ENCODE measurements at regions of chr4 and their contacts with region 1.

Region 1: DNA sequence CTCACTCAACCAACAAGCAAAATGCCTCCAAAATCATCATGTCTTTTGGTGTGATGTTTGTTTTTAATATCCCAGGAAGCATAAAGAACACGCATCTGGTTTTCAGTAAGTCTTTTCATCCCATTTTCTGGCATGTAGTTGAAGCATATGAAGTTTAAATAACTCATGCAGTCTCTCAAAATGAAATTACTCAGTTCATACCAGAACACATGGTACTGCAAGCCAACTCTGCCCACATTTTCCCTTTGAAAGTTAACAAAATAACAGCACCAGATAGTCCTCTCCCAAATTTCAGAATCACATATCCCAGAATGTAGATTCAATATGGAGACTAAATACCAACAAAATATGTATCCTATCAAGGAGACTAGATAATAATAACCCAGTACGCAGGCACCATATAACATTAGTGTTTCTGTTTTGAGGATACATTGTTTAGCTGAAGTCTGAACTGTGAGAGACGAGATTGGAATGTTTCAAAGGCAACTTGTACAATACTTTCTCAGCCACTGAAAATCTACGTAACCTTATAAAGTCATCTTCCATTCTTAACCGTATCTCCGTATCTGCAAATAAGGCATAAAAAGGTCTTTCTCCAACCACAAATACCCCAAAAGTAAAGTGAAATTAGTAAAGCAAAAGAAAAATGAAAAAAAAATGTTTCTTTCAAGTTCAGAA is 23.1 kb downstream of the CORIN start:
- DNase-seq: no peak
- ATAC-seq: no peak
- H3K4me3 ChIP-seq: no peak overlapping the region
- H3K4me3 Mint-ChIP-seq: no peak overlapping the region
- H3K27ac ChIP-seq: no peak overlapping the region
- H3K27ac Mint-ChIP-seq: no peak overlapping the region
- H3K4me1 ChIP-seq: no peaks in the 10 kb centered on the region
- H3K4me1 Mint-ChIP-seq: no peaks in the 10 kb centered on the region
- H3K27me3 ChIP-seq: peaks cover 0 to 7% (median 0%) of the 10 kb centered on the region in 4 experiments
- H3K27me3 Mint-ChIP-seq: peaks cover 15% of the 10 kb centered on the region
- CTCF ChIP-seq: no peak

Region 2: DNA sequence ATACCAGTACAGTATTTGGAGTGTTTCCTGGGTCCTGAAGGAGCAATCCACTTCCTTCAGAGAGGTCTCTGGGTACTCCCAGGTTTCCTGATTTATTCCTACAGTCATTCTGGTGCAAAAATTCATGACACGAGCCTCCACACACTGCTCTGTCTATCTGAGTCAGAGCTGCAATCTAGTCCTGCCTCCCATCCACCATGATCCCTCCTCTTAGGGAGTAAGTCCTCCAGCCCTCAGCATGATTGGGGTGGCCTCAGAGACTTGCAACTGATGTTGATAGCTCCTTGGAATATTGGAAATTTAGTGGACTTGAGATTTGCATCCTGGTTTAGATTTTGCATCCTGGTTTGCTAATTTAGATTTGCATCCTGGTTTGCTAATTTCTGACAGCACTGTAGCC is 181.3 kb after region 1 on chr4:
- CTCF ChIA-PET with region 1: no interaction called
- POLR2A ChIA-PET with region 1: no interaction called
- intact Hi-C with region 1: loop called (anchors 5 kb)
- DNase-seq: no peak
- ATAC-seq: no peak
- H3K4me3 ChIP-seq: no peak overlapping the region
- H3K4me3 Mint-ChIP-seq: no peak overlapping the region
- H3K27ac ChIP-seq: no peak overlapping the region
- H3K27ac Mint-ChIP-seq: no peak overlapping the region
- H3K4me1 ChIP-seq: no peaks in the 10 kb centered on the region
- H3K4me1 Mint-ChIP-seq: no peaks in the 10 kb centered on the region
- H3K27me3 ChIP-seq: peaks cover 0 to 6% (median 4%) of the 10 kb centered on the region in 4 experiments
- H3K27me3 Mint-ChIP-seq: peaks cover 13% of the 10 kb centered on the region
- CTCF ChIP-seq: no peak

Measured in B cell (primary cell).